Activated naive CD4-positive, alpha-beta T cell treated with anti-CD3 and anti-CD28 coated beads, Interleukin-2, amount 10 ng/mL, durations not matched to agents 7 days and 5 days (primary cell): ENCODE measurements at regions of chr15 and their contacts with region 1.

Region 1: GRCh38 chr15:62732078-62732477 is 310.5 kb upstream of the TPM1 start:
- DNase-seq: no peak
- H3K4me3 Mint-ChIP-seq: no peak overlapping the region
- H3K27ac Mint-ChIP-seq: no peak overlapping the region
- H3K4me1 Mint-ChIP-seq: no peaks in the 10 kb centered on the region
- H3K27me3 Mint-ChIP-seq: no peaks in the 10 kb centered on the region

Region 2: DNA sequence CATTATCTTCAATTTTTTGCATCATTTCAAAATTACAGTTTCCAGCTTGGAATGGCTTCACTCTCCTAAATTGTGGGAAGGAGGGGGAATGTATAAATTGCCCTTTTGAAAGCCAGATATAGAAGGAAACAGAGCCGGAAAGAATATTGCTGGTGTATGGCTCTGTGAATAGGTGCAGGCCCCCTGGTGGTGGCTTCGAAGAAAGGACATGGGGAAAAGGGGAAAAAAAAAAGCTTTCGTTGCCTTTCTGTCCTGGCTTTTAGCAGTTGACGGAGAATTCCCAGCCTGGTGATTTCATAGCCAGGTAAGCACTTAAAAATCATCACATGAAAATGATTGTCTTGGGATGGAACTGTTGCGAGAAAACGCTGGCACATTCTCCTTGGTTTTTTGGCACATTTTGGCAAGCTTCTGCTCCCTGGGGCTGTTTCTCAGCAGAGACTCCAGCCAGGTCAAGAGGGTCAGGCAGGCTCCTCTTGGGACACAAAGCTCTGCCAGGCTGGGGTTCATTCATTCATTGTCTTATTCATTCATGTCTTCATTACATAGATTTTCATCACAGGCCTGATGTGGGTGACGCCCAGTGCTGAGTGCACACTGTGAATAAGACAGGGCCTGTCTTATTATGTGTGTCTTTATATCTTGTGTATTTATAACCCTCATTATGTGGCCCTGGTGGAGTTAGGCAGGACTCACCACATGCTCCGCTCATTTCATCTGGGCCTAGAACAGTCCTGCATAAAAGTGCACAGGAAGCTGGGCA is 10.5 kb after region 1 on chr15:
- CTCF ChIA-PET with region 1: interaction called, 15 read pairs
- DNase-seq: peak; percentile 48
- H3K4me3 Mint-ChIP-seq: no peak overlapping the region
- H3K27ac Mint-ChIP-seq: no peak overlapping the region
- H3K4me1 Mint-ChIP-seq: no peaks in the 10 kb centered on the region
- H3K27me3 Mint-ChIP-seq: peaks cover 8% of the 10 kb centered on the region